ENCODE measurements at regions of chr2 and their contacts with region 1.

Region 1: DNA sequence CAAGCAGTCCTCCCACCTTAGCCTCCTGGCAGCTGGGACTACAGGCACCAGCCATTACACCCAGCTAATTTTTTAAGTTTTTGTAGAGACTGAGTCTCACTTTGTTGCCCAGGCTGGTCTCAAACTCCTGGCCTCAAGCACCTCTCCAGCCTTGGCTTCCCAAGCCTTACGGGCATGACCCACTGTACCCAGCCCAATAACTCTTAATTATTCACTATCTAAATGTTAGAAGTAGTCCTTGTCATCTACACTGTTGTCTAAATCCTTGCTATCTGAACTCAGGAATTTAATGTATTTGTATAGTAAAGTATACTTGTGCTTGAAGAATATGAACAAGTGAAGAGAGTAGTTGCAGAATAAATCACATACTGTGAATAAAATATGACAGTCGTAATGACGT is 37.9 kb upstream of the NBEAL1 start:
- DNase-seq: no peak

Region 2: DNA sequence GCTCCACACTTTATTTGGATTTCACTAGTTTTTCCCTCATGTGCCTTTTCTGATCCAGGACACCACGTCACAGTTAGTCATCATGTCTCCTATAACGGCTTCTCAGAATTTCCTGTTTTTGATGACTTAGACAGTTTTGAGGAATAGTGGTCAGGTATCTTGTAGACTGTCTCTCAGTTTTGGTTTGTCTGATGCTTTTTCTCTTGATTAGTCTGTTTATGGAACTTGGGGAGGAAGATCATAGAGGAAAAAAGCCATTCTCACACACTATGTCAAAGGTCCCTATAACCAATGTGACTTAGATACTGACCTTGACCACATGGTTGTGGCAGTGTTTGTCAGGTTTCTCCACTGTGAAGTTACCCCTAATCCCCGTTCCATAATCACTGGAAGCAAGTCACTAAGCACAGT is 469.3 kb after region 1 on chr2:
- intact Hi-C with region 1: loop called in 1 of 2 experiments (anchors 5 kb)
- DNase-seq: no peak

Measured in posterior vena cava (tissue), 2 donors.